ENCODE measurements at regions of chr11 and their contacts with region 1.

Region 1: DNA sequence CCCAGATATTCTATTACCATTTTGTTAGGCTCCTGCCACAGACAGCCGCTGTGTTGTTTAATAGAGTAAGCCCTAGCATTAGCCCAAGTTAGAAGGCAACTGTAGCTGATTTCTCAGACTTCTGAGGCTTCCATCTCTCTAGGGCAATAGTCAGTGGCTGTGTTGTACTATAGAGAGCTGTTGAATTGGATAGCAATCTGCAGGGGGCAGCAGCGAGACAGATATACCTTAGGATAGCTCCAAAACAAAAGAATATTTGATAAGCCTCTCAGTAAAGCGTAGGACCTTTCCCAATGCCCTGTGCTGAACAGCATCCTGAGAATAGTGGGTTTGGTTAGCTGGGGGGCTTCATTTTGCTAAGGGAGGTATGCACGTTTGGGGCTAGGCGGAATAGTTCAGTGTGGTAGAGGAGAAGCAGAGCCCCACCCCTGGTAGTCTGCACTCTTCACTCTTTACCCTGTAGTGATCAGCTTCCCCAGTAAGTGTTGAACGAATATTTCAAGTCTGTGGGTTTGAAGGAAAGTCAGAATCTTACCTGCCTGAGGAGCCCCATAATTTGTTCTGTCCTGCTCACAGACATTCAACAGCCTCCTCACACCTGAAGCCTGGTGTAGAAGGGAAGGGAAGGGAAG is 515.1 kb downstream of the INSC start:
- H3K4me3 ChIP-seq: no peak overlapping the region
- H3K27ac ChIP-seq: no peak overlapping the region
- H3K4me1 ChIP-seq: no peaks in the 10 kb centered on the region
- CTCF ChIP-seq: no peak

Region 2: DNA sequence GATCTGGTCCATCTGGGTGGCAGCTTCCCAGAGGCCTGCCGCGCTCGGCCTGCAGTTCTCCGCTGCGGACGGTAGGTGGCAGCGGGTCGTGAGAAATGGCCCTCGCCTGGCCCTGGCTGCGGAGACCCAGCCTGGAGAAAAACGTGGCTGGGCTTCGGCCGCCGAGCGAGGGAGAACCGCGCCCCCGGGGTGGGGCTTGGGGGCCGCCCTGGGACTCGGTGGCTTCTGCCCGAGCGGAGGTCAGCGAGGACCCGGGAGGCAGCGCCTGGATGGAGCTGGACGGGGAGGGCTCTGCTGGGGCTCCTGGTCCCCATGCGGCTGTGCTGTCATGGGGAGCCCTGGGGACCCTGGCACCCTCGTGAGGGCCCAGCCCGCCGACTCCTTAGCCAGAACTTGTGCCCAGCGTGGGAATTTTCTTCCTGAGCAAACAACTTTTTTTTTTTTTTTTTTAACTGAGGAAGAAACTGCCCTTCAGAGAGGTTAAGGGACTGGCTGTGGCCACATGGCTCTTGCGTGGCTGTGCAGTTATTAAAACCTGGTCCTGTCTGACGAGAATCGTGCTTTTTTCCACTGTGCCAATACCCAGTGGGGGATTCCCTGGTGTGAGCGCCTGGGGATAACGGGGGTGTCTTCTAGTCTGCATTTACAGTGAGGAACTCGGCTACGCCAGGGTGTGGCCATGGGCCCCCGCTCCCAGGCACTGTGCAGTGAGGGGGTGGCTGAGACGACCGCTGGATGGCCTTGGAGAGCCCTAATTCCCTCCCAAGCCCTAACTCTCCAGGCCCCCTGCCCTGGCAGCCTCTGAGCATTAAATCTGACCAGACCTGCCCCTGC is 20.5 kb after region 1 on chr11:
- CTCF ChIA-PET with region 1: interaction called, 12 read pairs
- POLR2A ChIA-PET with region 1: no interaction called
- H3K4me3 ChIP-seq: peak overlapping the region; percentile 27
- H3K27ac ChIP-seq: no peak overlapping the region; the same call in 1 of the 2 replicates
- H3K4me1 ChIP-seq: no peaks in the 10 kb centered on the region
- CTCF ChIP-seq: peak; percentile 95

Region 3: GRCh38 chr11:15688351-15688792 is 58.6 kb after region 1 on chr11:
- CTCF ChIA-PET with region 1: no interaction called
- POLR2A ChIA-PET with region 1: no interaction called
- H3K4me3 ChIP-seq: no peak overlapping the region
- H3K27ac ChIP-seq: no peak overlapping the region
- H3K4me1 ChIP-seq: no peaks in the 10 kb centered on the region
- CTCF ChIP-seq: no peak

Measured in HEK293 (cell line).